Activated T-helper 2 cell treated with anti-CD3 and anti-CD28 coated beads, Interferon-gamma antibody, Interleukin-2, Interleukin-4, amounts not matched to agents 10 μg/mL and 5 μg/mL and 100 μg/mL, durations not matched to agents 14 hours and 24 hours and 36 hours (primary cell): ENCODE measurements at regions of chr2 and their contacts with region 1.

Region 1: GRCh38 chr2:207529330-207530159 is at the start of gene CREB1:
- DNase-seq: peak; percentile 100
- H3K4me3 Mint-ChIP-seq: peak within 1 kb of the TSS; percentile 99
- H3K27ac Mint-ChIP-seq: peak within 1 kb of the TSS; percentile 100
- H3K4me1 Mint-ChIP-seq: peaks cover 49% of the 10 kb centered on the region
- H3K27me3 Mint-ChIP-seq: no peaks in the 10 kb centered on the region
- total RNA-seq, gene CREB1: 115 and 136 TPM in 2 replicates

Region 2: GRCh38 chr2:206765242-206766056 is 764.1 kb before region 1 on chr2 and contains the starts of genes FASTKD2 and MDH1B:
- intact Hi-C with region 1: loop called (anchors 1 kb)
- DNase-seq: peak; percentile 80
- H3K4me3 Mint-ChIP-seq: peak within 1 kb of the TSS; percentile 94
- H3K27ac Mint-ChIP-seq: peak within 1 kb of the TSS; percentile 97
- H3K4me1 Mint-ChIP-seq: peaks cover 29% of the 10 kb centered on the region
- H3K27me3 Mint-ChIP-seq: peaks cover 3% of the 10 kb centered on the region
- total RNA-seq, gene FASTKD2: 34.5 and 34.7 TPM in 2 replicates
- total RNA-seq, gene MDH1B: 0.25 and 0.55 TPM in 2 replicates

Region 3: DNA sequence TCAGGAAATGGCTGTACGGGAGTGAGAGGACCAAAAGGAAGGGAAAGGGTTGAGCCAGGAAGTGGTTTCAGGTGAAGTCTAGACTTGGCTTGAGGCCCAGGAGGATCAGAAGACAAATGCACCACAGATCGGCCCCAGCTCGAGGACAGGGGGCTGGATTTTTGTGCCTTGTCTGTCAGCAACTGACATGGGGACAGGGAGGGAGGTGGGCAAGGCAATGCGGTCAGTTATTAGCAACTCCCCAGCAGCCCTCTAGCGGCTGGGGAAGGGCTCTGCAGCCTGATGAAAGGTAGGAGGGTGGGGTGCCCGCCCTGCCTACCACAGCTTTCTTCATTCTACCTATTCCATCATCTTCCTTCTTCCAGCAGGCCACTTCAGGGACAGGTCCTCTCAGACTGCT is 540.2 kb before region 1 on chr2:
- intact Hi-C with region 1: no loop called
- DNase-seq: no peak
- H3K4me3 Mint-ChIP-seq: no peak overlapping the region
- H3K27ac Mint-ChIP-seq: no peak overlapping the region
- H3K4me1 Mint-ChIP-seq: peaks cover 21% of the 10 kb centered on the region
- H3K27me3 Mint-ChIP-seq: no peaks in the 10 kb centered on the region

Region 4: DNA sequence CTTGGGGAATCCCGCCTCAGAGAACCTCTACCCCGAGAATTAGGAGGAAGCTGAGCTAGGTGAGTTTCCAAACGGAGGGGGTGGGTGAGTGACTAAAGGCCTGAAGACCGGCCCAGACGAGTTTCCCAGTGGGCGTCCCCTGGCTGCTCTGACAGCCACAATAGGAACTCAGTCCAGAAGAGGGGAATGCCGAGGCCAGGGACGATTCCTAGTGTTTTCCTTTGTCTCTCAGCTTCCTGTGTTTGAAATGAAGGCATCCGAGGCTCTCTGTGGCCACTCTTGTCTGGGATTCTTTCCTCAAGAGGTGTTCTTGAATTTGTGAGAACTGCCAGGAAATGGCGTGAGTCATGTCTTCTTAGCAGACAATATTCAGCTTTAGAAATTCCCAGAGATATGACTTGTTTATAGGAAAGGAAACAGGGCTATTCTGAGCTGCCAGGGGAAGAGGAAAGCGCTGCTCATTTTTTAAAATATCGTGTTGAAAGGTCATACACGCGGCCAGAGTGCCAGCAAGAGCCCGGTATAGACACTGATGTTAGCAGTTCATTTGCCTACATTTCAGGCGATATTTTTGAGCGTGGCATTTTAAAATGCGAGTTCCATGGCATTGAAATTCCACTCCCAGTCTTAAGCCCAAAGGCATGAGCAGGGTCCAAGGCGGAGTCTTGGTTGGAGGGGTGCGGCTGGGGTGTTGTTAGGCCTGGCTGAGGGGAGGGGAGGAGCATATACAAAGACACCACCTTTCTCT is 194.7 kb before region 1 on chr2:
- intact Hi-C with region 1: loop called (anchors 2 kb)
- DNase-seq: no peak
- H3K4me3 Mint-ChIP-seq: peak overlapping the region; percentile 26
- H3K27ac Mint-ChIP-seq: peak overlapping the region; percentile 93
- H3K4me1 Mint-ChIP-seq: peaks cover 74% of the 10 kb centered on the region
- H3K27me3 Mint-ChIP-seq: no peaks in the 10 kb centered on the region

Region 5: DNA sequence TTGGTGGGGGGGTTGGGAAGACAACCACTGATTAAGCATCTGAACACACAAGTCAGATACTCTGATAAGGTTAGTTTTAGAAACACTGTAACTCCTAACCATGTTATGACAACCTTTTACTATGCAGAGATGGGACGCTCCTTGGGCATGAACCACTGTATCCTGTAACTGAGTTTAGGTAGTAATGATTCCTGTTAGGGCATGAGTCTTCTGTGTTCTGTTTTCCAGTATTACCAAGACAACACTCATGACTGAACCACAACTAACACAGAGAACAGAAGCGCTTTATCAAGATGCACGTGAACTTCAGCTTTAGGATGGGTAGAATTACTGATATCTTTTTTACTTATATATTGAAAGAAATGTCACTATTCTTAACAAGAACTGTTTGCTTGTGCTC is 13.9 kb before region 1 on chr2:
- intact Hi-C with region 1: loop called (anchors 1 kb)
- DNase-seq: no peak
- H3K4me3 Mint-ChIP-seq: no peak overlapping the region
- H3K27ac Mint-ChIP-seq: peak overlapping the region; percentile 40
- H3K4me1 Mint-ChIP-seq: peaks cover 45% of the 10 kb centered on the region
- H3K27me3 Mint-ChIP-seq: no peaks in the 10 kb centered on the region

Region 6: GRCh38 chr2:207625018-207625907 is 95.7 kb after region 1 on chr2 and contains the start of gene METTL21A:
- intact Hi-C with region 1: loop called (anchors 1 kb)
- DNase-seq: peak; percentile 93
- H3K4me3 Mint-ChIP-seq: peak within 1 kb of the TSS; percentile 92
- H3K27ac Mint-ChIP-seq: peak within 1 kb of the TSS; percentile 98
- H3K4me1 Mint-ChIP-seq: peaks cover 37% of the 10 kb centered on the region
- H3K27me3 Mint-ChIP-seq: no peaks in the 10 kb centered on the region
- total RNA-seq, gene METTL21A: 32.1 and 35.1 TPM in 2 replicates

Region 7: DNA sequence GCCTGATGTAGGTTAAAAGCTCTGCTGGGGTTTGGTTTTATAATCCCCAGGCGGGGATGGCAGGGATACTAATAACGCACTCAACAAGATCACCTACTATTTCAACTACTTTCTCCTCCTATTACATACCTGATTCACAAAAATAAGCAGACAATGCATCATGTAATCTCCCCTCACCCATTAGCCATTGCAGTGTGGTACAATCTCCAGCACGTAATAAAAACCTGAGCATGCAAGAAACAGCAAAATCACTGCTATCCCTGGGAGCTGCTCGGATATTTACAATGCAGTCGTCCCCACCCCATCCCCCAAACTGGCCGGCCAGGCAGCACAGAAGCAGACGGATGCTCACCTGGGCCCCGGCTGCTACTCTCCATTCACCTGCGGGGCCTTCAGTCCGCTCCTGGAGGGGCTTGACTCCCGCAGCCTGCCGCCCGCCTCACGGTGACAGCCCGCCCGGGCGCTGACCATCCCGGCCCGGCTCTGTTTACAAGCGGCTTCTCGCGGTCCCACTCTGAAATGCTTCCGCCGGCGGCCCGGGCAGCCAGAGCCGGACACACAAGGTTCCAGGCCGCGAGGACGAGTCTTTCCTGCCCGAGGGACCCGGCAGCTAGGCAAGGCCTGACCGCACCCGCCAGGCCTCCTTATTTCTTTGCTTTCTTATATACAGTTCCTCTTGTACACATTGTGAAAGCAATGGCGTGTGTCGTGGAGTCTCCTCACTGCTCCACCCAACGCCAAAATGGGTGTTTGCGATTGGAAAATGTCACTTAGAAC is 495.7 kb after region 1 on chr2 and contains the start of gene PLEKHM3:
- intact Hi-C with region 1: loop called (anchors 5 kb)
- DNase-seq: peak; percentile 76
- H3K4me3 Mint-ChIP-seq: peak within 1 kb of the TSS; percentile 100
- H3K27ac Mint-ChIP-seq: peak within 1 kb of the TSS; percentile 84
- H3K4me1 Mint-ChIP-seq: peaks cover 19% of the 10 kb centered on the region
- H3K27me3 Mint-ChIP-seq: peaks cover 3% of the 10 kb centered on the region
- total RNA-seq, gene PLEKHM3: 7.1 and 8.4 TPM in 2 replicates